ENCODE measurements at regions of chr10 and their contacts with region 1.

Region 1: DNA sequence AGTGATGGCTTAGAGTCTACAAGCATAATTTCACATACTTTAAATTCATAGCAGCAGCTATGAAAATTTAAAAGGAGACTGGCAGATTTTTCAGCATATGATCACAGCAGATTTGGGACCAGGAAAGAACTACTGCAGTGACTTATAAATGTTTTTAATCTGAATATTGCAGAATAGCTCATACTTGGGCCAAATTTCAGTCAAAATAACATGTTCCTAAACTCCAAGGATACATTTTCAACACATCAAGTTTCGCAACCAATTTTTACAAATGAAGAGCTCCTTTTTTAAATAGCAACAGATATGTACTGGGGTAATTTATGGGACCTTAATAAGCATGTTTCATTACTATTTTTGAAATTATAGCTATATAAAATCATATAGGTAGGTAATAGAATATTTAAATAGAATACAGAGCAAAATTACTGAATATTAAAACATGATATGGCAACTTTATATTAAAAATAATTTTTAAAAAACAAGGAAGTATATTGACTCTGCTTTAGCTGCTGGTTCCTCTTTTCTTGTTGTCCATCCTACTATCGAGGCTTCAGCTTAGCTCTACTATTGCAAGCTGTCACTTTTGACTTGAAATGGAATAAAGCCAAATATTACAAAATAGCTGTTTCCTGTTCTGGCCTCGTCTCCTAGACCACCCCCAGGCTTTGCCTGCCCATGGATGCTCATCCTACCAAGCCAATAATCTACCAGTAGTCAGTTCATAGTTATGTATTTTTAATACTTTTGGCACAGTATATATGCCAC is 123.1 kb downstream of the NRBF2 start:
- DNase-seq: no peak
- ATAC-seq: peak; percentile 3; the same call in 1 of the 3 replicates
- H3K4me3 ChIP-seq: no peak overlapping the region
- H3K27ac ChIP-seq: no peak overlapping the region
- H3K4me1 ChIP-seq: peaks cover 6 to 12% of the 10 kb centered on the region in 2 experiments; a peak in 4 of 5 replicates
- H3K27me3 ChIP-seq: no peaks in the 10 kb centered on the region
- CTCF ChIP-seq: no peak
- EP300 ChIP-seq: no peak
- POLR2A ChIP-seq: no peak
- RAD21 ChIP-seq: no peak

Region 2: GRCh38 chr10:62839590-62839989 is 416.6 kb before region 1 on chr10:
- CTCF ChIA-PET with region 1: no interaction called
- POLR2A ChIA-PET with region 1: no interaction called
- in situ Hi-C with region 1: no loop called
- intact Hi-C with region 1: no loop called
- DNase-seq: no peak
- ATAC-seq: no peak
- H3K4me3 ChIP-seq: no peak overlapping the region
- H3K27ac ChIP-seq: no peak overlapping the region
- H3K4me1 ChIP-seq: no peaks in the 10 kb centered on the region
- H3K27me3 ChIP-seq: no peaks in the 10 kb centered on the region
- CTCF ChIP-seq: no peak
- EP300 ChIP-seq: no peak
- POLR2A ChIP-seq: no peak
- RAD21 ChIP-seq: no peak

Region 3: GRCh38 chr10:63241841-63242281 is 14.3 kb before region 1 on chr10:
- CTCF ChIA-PET with region 1: no interaction called
- POLR2A ChIA-PET with region 1: interaction called, 33 read pairs
- in situ Hi-C with region 1: no loop called
- intact Hi-C with region 1: no loop called
- DNase-seq: no peak
- ATAC-seq: peak; percentile 28
- H3K4me3 ChIP-seq: no peak overlapping the region
- H3K27ac ChIP-seq: peak overlapping the region; percentile 1; the same call in 1 of the 3 replicates
- H3K4me1 ChIP-seq: peaks cover 0 to 15% of the 10 kb centered on the region in 2 experiments; a peak in 3 of 5 replicates
- H3K27me3 ChIP-seq: no peaks in the 10 kb centered on the region
- CTCF ChIP-seq: no peak
- EP300 ChIP-seq: no peak
- POLR2A ChIP-seq: no peak
- RAD21 ChIP-seq: no peak